Endothelial cell of umbilical vein (primary cell): ENCODE measurements at regions of chr9 and their contacts with region 1.

Region 1: GRCh38 chr9:19102631-19103345 is at the start of gene HAUS6:
- DNase-seq: peak; percentile 98
- H3K4me3 ChIP-seq: peak within 1 kb of the TSS; percentile 85 to 93 (median 87)
- H3K27ac ChIP-seq: peak within 1 kb of the TSS; percentile 52
- H3K4me1 ChIP-seq: peaks cover 8% of the 10 kb centered on the region
- H3K27me3 ChIP-seq: no peaks in the 10 kb centered on the region
- CTCF ChIP-seq: peak; percentile 7 to 63
- POLR2A ChIP-seq: peak; percentile 85
- total RNA-seq, gene HAUS6: 18.9 and 19.6 TPM in 2 replicates

Region 2: DNA sequence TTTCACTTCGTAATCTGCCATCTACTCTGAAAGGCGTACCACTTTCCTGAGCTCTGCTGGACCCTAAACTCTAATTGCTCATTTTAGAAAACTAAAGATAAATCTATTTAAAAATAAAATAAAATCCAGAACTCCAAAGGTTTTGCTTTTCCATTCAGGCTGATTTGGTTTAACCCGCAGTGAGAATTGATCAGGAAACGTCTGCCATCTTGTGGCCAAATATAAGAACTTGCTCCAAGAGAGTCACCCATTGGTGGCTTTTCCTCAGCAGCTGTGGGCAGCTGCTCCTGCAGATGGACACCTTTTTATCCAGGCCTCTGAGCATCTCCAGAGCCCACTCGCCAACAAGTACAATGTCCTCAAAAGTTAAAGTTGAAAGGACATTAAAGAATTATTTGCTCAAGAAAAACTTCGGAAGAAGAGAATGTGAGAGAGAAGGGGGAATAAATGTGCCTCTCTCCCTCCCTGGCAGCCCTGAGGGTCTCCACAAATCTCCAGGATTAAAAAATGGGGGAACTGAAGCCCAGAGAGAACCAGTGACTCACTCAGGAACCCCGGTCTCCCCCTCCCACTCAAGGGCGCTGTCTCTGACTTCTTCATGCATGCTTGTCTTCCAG is 73.8 kb before region 1 on chr9:
- CTCF ChIA-PET with region 1: no interaction called
- POLR2A ChIA-PET with region 1: no interaction called
- dilution Hi-C with region 1: no loop called
- intact Hi-C with region 1: no loop called
- DNase-seq: peak; percentile 59
- H3K4me3 ChIP-seq: no peak overlapping the region
- H3K27ac ChIP-seq: no peak overlapping the region
- H3K4me1 ChIP-seq: no peaks in the 10 kb centered on the region
- H3K27me3 ChIP-seq: no peaks in the 10 kb centered on the region
- CTCF ChIP-seq: peak; percentile 58 to 66
- POLR2A ChIP-seq: no peak

Region 3: DNA sequence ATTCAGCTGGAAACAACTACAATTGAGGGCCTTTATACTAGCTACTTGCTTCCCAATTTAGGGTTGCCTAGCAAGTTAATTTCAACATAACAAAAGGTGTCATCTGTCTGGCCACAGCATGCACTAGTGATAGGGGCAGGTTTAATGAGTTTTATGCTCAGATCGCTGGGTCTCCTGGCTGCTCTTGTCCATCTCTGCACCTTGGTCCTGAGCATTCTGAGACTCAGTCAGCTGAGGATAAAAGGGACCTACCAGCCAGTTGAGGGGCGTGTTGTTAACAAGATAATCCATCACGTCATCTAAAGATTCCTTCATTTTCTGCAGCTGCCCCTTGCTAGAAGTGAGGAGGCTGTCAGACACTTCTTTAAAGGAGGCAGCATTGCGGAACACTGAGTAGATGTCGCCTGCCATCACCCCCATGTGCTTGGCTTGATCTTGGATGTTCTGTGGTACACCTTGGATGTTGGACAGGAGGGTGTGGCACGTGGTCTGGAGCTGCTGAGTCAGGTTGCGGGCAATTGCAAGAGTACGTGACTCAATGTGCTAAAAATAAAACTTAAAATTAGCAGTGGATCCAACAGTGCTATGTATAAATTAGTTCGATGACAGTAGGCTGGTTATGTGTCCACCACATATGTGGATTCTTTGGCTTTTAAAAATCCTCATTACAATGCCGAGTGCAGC is 13.5 kb after region 1 on chr9:
- CTCF ChIA-PET with region 1: interaction called, 5 read pairs
- POLR2A ChIA-PET with region 1: no interaction called
- dilution Hi-C with region 1: no loop called
- intact Hi-C with region 1: loop called (anchors 1 kb)
- DNase-seq: no peak
- H3K4me3 ChIP-seq: no peak overlapping the region
- H3K27ac ChIP-seq: no peak overlapping the region
- H3K4me1 ChIP-seq: peaks cover 30% of the 10 kb centered on the region
- H3K27me3 ChIP-seq: no peaks in the 10 kb centered on the region
- CTCF ChIP-seq: no peak
- POLR2A ChIP-seq: no peak

Region 4: DNA sequence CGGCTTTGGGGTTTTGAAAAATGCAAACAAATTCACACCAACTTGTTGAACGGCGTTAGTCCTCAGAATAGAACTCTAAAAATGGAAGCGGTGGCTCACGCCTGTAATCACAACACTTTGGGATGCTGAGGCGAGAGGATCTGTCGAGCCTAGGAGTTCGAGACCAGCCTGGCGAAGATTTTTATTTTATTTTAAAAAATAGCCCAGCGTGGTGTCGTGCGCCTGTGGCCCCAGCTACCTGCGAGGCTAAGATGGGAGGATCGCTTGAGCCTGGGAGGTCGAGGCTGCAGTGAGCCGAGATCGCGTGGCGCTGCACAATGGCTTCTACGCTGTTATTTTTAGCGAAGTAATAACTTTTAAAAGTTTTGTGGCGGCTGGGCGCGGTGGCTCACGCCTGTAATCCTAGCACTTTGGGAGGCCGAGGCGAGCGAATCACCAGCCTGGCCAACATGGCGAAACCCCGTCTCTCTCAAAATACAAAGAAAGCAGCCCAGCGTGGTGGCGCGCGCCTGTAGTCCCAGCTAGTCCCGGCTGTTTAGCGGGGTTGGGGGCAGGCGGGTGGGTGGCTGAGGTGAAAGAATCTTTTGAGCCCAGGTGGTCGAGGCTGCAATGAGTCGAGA is 25.2 kb after region 1 on chr9:
- CTCF ChIA-PET with region 1: no interaction called
- POLR2A ChIA-PET with region 1: no interaction called
- dilution Hi-C with region 1: no loop called
- intact Hi-C with region 1: loop called (anchors 1 kb)
- DNase-seq: peak; percentile 59
- H3K4me3 ChIP-seq: peak overlapping the region; percentile 43 to 87 (median 75)
- H3K27ac ChIP-seq: peak overlapping the region; percentile 76
- H3K4me1 ChIP-seq: peaks cover 29% of the 10 kb centered on the region
- H3K27me3 ChIP-seq: no peaks in the 10 kb centered on the region
- CTCF ChIP-seq: no peak
- POLR2A ChIP-seq: no peak

Region 5: DNA sequence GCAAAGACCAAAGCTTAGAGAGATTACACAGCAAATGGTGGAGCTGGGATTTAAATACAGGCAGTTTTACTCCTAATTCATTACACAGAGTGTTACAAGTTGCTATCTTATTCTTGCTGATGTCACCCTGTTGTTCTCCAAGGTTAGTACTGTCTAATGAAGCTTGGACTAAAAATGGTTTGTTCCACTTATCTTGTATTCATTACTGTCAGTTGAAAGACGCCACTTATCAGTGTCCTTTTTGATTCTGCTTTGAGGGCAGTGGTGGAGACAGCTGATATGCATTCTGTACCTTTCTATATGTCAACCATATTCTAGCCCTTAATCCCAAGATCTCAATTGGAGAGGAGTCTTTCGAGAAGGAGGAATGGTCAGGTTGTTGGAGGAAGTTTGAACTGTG is 113.7 kb after region 1 on chr9:
- CTCF ChIA-PET with region 1: no interaction called
- POLR2A ChIA-PET with region 1: no interaction called
- dilution Hi-C with region 1: no loop called
- intact Hi-C with region 1: no loop called
- DNase-seq: no peak
- H3K4me3 ChIP-seq: no peak overlapping the region
- H3K27ac ChIP-seq: no peak overlapping the region
- H3K4me1 ChIP-seq: no peaks in the 10 kb centered on the region
- H3K27me3 ChIP-seq: no peaks in the 10 kb centered on the region
- CTCF ChIP-seq: no peak
- POLR2A ChIP-seq: no peak

Region 6: DNA sequence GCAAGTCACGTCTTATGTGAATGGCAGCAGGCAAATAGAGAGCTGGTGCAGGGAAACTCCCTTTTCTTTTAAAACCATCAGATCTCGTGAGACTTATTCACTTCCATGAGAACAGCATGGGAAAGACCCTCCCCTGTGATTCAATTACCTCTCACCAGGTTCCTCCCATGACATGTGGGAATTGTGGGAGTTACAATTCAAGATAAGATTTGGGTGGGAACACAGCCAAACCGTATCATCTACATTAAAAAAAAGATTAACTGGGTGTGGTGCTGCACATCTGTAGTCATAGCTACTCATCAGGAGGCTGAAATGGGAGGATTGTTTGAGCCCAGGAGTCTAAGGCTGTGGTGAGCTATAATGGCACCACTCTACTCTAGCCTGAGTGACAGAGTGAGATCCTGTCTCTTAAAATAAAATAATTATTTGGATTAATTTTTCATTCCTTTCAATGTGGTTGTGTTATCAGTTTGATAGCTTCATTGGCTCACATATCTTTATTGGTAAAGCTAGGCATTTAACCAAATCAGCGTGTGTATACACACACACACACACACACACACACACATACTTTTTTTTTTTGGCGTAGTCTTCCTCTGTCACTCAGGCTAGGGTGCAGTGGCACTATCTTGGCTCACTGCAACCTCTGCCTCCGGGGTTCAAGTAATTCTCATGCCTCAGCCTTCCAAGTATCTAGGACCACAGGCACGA is 149.5 kb after region 1 on chr9:
- CTCF ChIA-PET with region 1: no interaction called
- POLR2A ChIA-PET with region 1: no interaction called
- dilution Hi-C with region 1: no loop called
- intact Hi-C with region 1: no loop called
- DNase-seq: no peak
- H3K4me3 ChIP-seq: no peak overlapping the region
- H3K27ac ChIP-seq: no peak overlapping the region
- H3K4me1 ChIP-seq: no peaks in the 10 kb centered on the region
- H3K27me3 ChIP-seq: no peaks in the 10 kb centered on the region
- CTCF ChIP-seq: no peak
- POLR2A ChIP-seq: no peak